MCF 10A (cell line): ENCODE measurements at regions of chr14 and their contacts with region 1.

Region 1: GRCh38 chr14:22200977-22201605 is 387.9 kb downstream of the DAD1 start:
- DNase-seq: peak; percentile 57
- H3K4me3 Mint-ChIP-seq: no peak overlapping the region
- H3K27ac Mint-ChIP-seq: no peak overlapping the region
- H3K4me1 Mint-ChIP-seq: peaks cover 6% of the 10 kb centered on the region
- H3K27me3 Mint-ChIP-seq: peaks cover 12% of the 10 kb centered on the region
- CTCF ChIP-seq: peak; percentile 64

Region 2: DNA sequence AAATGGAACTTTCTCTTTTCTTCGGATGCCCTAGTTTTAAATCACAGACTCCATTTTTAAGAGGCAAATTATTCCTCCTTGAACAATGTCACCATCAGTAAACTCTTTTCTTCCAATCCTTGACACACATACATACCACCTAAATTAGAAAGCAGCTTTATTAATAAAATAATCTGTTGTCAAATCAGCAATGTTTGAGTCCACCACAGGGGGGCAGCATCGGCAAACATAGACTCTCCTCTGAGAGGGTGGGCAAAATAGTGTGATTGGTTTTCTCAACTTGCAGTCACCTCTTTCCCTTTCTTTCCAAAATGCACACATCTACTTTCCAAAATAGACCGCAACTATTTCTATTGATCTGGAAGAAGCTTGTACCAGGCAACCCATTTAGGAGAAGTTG is 89.1 kb before region 1 on chr14:
- CTCF ChIA-PET with region 1: interaction called, 3 read pairs
- POLR2A ChIA-PET with region 1: no interaction called
- intact Hi-C with region 1: loop called (anchors 1 kb)
- DNase-seq: peak; percentile 46
- H3K4me3 Mint-ChIP-seq: no peak overlapping the region
- H3K27ac Mint-ChIP-seq: no peak overlapping the region
- H3K4me1 Mint-ChIP-seq: no peaks in the 10 kb centered on the region
- H3K27me3 Mint-ChIP-seq: peaks cover 59% of the 10 kb centered on the region
- CTCF ChIP-seq: peak; percentile 56

Region 3: DNA sequence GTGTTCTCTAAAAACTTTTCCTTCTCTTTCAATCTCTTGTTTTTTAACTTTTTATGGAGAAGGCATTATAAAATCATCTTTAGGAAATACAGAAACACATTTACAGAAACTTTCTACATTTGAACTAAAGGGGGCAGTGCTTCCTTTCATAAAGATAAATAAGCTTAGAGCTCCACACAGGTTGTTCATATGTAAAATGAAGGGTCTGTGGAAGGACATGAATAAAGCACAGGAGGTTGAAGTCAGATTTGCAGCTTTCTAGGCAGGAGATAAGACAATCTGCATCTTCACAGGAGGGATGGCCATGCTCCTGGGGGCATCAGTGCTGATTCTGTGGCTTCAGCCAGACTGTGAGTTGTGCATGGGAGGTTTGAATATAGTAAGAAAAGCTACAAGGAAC is 38.0 kb before region 1 on chr14:
- CTCF ChIA-PET with region 1: interaction called, 14 read pairs
- POLR2A ChIA-PET with region 1: no interaction called
- intact Hi-C with region 1: no loop called
- DNase-seq: peak; percentile 18
- H3K4me3 Mint-ChIP-seq: no peak overlapping the region
- H3K27ac Mint-ChIP-seq: no peak overlapping the region
- H3K4me1 Mint-ChIP-seq: peaks cover 14% of the 10 kb centered on the region
- H3K27me3 Mint-ChIP-seq: peaks cover 24% of the 10 kb centered on the region
- CTCF ChIP-seq: peak; percentile 32

Region 4: DNA sequence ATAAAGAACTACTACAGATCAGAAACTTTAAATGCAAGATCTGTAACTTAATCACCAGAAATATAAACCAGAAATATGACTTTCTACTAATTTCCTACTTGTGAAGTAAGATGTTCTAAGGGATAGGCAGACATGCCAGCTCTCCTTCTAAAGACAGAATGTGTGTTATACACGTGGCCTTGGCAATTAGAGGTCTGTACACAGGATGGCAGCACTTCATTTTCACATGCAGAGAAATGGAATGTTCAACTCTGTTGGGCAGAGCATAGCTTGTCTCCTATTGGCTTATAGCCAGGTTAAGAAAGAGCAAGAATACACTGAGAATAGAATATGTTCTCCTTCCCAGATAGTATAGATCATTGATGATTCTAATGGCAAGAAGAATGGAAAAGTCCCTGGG is 15.9 kb before region 1 on chr14:
- CTCF ChIA-PET with region 1: interaction called, 23 read pairs
- POLR2A ChIA-PET with region 1: no interaction called
- intact Hi-C with region 1: no loop called
- DNase-seq: peak; percentile 13
- H3K4me3 Mint-ChIP-seq: no peak overlapping the region
- H3K27ac Mint-ChIP-seq: no peak overlapping the region
- H3K4me1 Mint-ChIP-seq: no peaks in the 10 kb centered on the region
- H3K27me3 Mint-ChIP-seq: peaks cover 4% of the 10 kb centered on the region
- CTCF ChIP-seq: no peak

Region 5: DNA sequence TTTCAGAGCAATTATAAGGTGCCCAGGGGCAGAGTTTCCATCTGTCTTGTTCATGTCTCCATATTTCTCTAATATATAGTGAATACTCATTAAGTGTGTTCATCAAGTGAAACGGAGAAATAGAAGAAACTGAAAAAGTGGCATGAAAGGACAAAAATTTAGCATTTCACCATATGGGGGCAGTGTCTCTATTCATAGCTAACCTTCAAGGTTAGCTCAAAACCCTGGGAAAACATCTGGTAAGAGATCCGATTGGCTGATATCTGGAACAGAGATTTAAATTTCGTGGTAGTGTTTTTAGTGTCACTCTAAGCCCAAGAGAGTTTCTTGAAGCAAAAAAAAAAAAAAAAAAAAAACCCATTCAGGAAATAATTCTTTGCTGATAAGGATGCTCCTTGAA is 20.4 kb after region 1 on chr14:
- CTCF ChIA-PET with region 1: interaction called, 25 read pairs
- POLR2A ChIA-PET with region 1: no interaction called
- intact Hi-C with region 1: no loop called
- DNase-seq: peak; percentile 33
- H3K4me3 Mint-ChIP-seq: no peak overlapping the region
- H3K27ac Mint-ChIP-seq: no peak overlapping the region
- H3K4me1 Mint-ChIP-seq: peaks cover 8% of the 10 kb centered on the region
- H3K27me3 Mint-ChIP-seq: peaks cover 24% of the 10 kb centered on the region
- CTCF ChIP-seq: peak; percentile 43

Region 6: GRCh38 chr14:22296722-22297121 is 95.6 kb after region 1 on chr14:
- CTCF ChIA-PET with region 1: interaction called, 10 read pairs
- POLR2A ChIA-PET with region 1: no interaction called
- intact Hi-C with region 1: no loop called
- DNase-seq: no peak
- H3K4me3 Mint-ChIP-seq: no peak overlapping the region
- H3K27ac Mint-ChIP-seq: no peak overlapping the region
- H3K4me1 Mint-ChIP-seq: peaks cover 13% of the 10 kb centered on the region
- H3K27me3 Mint-ChIP-seq: no peaks in the 10 kb centered on the region
- CTCF ChIP-seq: no peak